ENCODE measurements at regions of chr18 and their contacts with region 1.

Region 1: GRCh38 chr18:30280880-30281470 is 761.6 kb downstream of the DSC3 start:
- DNase-seq: peak; percentile 65
- H3K4me3 ChIP-seq: no peak overlapping the region
- H3K27ac ChIP-seq: no peak overlapping the region
- H3K4me1 ChIP-seq: no peaks in the 10 kb centered on the region
- H3K27me3 ChIP-seq: no peaks in the 10 kb centered on the region
- CTCF ChIP-seq: peak; percentile 52
- POLR2A ChIP-seq: no peak

Region 2: GRCh38 chr18:28961669-28962228 is 1319.2 kb before region 1 on chr18:
- CTCF ChIA-PET with region 1: interaction called, 11 read pairs
- POLR2A ChIA-PET with region 1: no interaction called
- dilution Hi-C with region 1: no loop called
- intact Hi-C with region 1: loop called (anchors 10 kb)
- DNase-seq: peak; percentile 43
- H3K4me3 ChIP-seq: no peak overlapping the region
- H3K27ac ChIP-seq: no peak overlapping the region
- H3K4me1 ChIP-seq: peaks cover 8% of the 10 kb centered on the region
- H3K27me3 ChIP-seq: no peaks in the 10 kb centered on the region
- CTCF ChIP-seq: peak; percentile 50 to 51
- POLR2A ChIP-seq: no peak

Region 3: DNA sequence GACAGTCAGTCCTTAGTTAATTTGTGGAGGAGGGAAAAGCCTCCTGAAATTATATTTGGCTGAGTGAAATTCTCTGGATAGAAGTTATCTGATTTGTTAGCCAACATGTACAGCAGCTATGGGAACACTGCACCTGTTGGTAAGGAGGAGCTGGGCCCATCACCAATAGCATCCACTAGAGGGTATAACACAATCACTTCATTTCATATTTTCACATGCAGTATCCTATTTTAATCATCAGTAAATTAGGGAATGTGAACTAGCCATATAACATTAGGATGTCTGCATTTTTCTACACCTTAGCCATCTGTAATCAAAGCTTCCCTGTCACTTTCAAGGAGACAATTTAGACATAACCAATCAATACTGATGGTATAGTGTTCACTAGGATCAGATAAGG is 1285.7 kb before region 1 on chr18:
- CTCF ChIA-PET with region 1: interaction called, 24 read pairs
- POLR2A ChIA-PET with region 1: no interaction called
- dilution Hi-C with region 1: no loop called
- intact Hi-C with region 1: loop called (anchors 10 kb)
- DNase-seq: peak; percentile 23
- H3K4me3 ChIP-seq: no peak overlapping the region
- H3K27ac ChIP-seq: no peak overlapping the region
- H3K4me1 ChIP-seq: no peaks in the 10 kb centered on the region
- H3K27me3 ChIP-seq: no peaks in the 10 kb centered on the region
- CTCF ChIP-seq: peak in 1 of 2 donors; percentile 29
- POLR2A ChIP-seq: no peak

Region 4: GRCh38 chr18:29874519-29875098 is 406.4 kb before region 1 on chr18:
- CTCF ChIA-PET with region 1: interaction called, 100 read pairs
- POLR2A ChIA-PET with region 1: no interaction called
- dilution Hi-C with region 1: no loop called
- intact Hi-C with region 1: loop called (anchors 1 kb)
- DNase-seq: peak; percentile 30
- H3K4me3 ChIP-seq: no peak overlapping the region
- H3K27ac ChIP-seq: no peak overlapping the region
- H3K4me1 ChIP-seq: no peaks in the 10 kb centered on the region
- H3K27me3 ChIP-seq: no peaks in the 10 kb centered on the region
- CTCF ChIP-seq: peak; percentile 21 to 38
- POLR2A ChIP-seq: no peak

Region 5: DNA sequence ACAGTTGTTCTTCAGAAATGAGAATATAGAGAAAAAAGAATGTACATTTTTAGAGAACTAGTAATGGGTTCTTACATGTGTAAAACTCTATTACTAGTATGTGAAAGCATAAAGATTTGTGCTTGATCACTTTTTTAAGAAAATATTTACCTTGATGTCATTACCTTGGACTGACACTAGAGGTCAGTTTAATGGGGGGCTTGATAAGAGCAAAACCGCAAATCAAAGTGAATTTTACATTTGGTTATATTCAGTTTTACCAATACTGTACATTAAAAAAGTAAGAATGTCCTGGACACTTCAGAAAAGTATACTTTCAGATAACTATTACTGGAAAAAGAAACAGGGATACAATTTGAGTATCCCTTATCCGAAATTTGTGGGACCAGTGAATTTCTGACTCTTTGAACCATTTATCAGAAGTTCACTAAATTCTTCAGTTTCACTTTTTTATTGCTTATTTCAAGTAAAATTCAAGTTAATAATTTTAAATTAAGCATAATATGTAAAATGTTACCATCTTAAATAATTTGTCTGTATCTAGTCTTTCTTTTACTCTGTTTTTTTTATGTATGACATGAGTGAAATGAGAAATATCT is 387.9 kb before region 1 on chr18:
- CTCF ChIA-PET with region 1: interaction called, 6 read pairs
- POLR2A ChIA-PET with region 1: no interaction called
- dilution Hi-C with region 1: no loop called
- intact Hi-C with region 1: loop called (anchors 2 kb)
- DNase-seq: peak; percentile 19
- H3K4me3 ChIP-seq: no peak overlapping the region
- H3K27ac ChIP-seq: no peak overlapping the region
- H3K4me1 ChIP-seq: no peaks in the 10 kb centered on the region
- H3K27me3 ChIP-seq: no peaks in the 10 kb centered on the region
- CTCF ChIP-seq: peak; percentile 9 to 35
- POLR2A ChIP-seq: no peak

Region 6: DNA sequence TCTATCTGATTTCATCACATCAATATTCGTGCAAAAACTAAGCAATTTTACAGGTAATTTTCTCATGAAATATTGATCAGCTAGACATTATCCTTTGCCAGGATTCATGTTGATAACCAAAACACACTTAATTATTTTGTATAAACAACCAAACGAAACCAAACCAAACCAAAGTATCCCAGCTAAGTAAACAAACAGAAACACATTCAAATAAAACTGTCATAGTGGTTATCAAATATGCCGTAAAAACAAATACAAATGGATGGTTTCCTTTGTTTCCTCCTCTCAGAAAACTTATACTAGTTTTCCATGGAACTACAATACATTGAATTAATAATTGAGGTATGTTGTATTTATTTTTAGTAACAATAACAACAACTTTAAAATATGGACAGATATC is 15.8 kb before region 1 on chr18:
- CTCF ChIA-PET with region 1: interaction called, 10 read pairs
- POLR2A ChIA-PET with region 1: no interaction called
- dilution Hi-C with region 1: no loop called
- intact Hi-C with region 1: no loop called
- DNase-seq: no peak
- H3K4me3 ChIP-seq: no peak overlapping the region
- H3K27ac ChIP-seq: no peak overlapping the region
- H3K4me1 ChIP-seq: no peaks in the 10 kb centered on the region
- H3K27me3 ChIP-seq: no peaks in the 10 kb centered on the region
- CTCF ChIP-seq: no peak
- POLR2A ChIP-seq: no peak

Measured in endothelial cell of umbilical vein (primary cell).